ENCODE measurements at regions of chr9 and their contacts with region 1.

Region 1: GRCh38 chr9:75487856-75488718 is 399.8 kb downstream of the OSTF1 start:
- DNase-seq: no peak
- H3K4me3 ChIP-seq: no peak overlapping the region
- H3K27ac ChIP-seq: no peak overlapping the region
- H3K4me1 ChIP-seq: no peaks in the 10 kb centered on the region
- H3K27me3 ChIP-seq: no peaks in the 10 kb centered on the region
- CTCF ChIP-seq: no peak

Region 2: GRCh38 chr9:74100042-74100441 is 1388.0 kb before region 1 on chr9:
- CTCF ChIA-PET with region 1: no interaction called
- POLR2A ChIA-PET with region 1: no interaction called
- intact Hi-C with region 1: no loop called
- DNase-seq: no peak
- H3K4me3 ChIP-seq: no peak overlapping the region
- H3K27ac ChIP-seq: no peak overlapping the region
- H3K4me1 ChIP-seq: no peaks in the 10 kb centered on the region
- H3K27me3 ChIP-seq: no peaks in the 10 kb centered on the region
- CTCF ChIP-seq: no peak

Region 3: DNA sequence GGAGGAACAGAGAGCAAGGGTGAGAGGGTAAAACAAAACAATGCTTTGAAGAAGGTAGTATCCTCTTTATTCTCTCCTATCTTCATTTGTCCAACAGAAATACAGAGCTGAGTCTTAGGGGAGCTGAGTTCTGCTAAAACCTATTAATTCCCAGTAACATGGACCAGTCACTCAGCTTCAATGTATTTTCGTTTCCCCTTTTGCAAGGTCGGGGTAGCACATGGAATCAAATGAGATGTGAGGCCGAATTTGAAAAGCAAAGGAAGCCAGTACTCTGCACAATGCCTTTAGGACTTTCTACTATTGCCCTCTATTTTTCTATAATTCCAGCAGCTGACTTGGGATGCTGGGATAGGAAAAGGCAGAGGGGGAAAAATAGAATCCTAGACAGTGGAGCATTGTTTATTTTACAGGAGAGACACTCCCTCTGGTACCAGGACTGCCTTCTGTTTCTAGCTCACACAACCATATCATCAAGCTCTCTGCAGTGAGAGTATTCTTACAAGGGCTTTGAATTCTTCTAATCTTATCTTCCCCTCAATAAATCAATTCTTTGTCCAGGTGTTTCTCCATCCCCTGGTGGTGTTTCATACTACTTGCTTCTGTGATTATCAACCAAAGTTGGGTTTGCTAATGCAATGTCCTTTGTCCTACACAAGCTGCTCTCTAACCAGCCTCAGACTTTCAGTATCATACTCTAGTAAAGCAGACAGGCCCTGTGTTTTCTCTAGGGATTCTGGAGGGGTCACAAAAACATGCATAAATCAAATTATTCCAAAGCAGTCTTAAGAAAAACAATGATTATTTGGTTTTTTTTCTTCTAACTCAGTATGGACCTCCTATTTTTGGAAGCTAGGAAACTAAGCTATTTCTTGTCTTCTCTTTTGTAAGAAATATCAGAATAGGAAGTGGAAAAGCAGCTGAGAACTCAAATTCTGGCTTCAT is 58.3 kb before region 1 on chr9:
- CTCF ChIA-PET with region 1: no interaction called
- POLR2A ChIA-PET with region 1: no interaction called
- intact Hi-C with region 1: loop called (anchors 10 kb)
- DNase-seq: no peak
- H3K4me3 ChIP-seq: no peak overlapping the region
- H3K27ac ChIP-seq: no peak overlapping the region
- H3K4me1 ChIP-seq: no peaks in the 10 kb centered on the region
- H3K27me3 ChIP-seq: peaks cover 5% of the 10 kb centered on the region; the same call in 1 of the 2 replicates
- CTCF ChIP-seq: no peak

Region 4: DNA sequence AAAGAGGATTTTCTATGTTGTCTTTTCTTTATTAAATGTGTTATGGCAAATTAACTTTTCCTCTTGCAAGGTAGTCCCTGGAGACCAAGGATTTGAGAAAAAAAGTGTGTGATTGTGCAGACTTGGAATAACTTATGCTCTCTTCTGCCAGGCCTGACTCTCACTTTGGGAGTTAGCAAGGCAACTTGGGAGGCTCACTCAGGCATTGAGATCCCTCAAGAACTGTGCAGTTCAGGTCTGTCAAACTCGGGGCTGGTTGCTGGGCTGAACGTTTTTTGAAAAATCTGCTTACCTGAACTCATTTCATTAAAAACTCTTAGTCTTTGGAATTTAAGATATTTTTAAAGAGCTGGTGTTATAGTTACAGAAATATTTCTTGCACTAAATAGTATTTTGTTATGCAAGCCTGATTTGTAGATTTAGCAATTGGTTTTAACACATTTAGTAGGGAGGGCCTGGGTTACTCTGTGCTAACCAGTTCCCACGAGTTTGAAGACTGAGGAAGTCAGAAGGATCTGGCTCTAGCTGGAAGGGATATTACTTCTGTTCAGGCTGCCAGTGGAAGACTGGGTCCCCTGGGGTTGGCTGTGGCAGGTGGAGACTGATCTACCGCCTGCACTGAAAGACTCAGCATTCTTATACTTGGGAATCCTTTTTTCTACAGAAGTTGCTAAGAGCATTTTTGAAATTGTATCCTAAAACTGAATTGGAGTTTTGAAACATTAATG is 252.0 kb after region 1 on chr9:
- CTCF ChIA-PET with region 1: no interaction called
- POLR2A ChIA-PET with region 1: no interaction called
- intact Hi-C with region 1: no loop called
- DNase-seq: no peak
- H3K4me3 ChIP-seq: no peak overlapping the region
- H3K27ac ChIP-seq: no peak overlapping the region
- H3K4me1 ChIP-seq: no peaks in the 10 kb centered on the region
- H3K27me3 ChIP-seq: no peaks in the 10 kb centered on the region
- CTCF ChIP-seq: no peak

Measured in PC-9 (cell line).